Dendritic cell treated with granulocyte-macrophage colony-stimulating factor and Interleukin-4, amounts not matched to agents 40 ng/mL and 50 ng/mL, for 4 days (primary cell): ENCODE measurements at regions of chr14 and their contacts with region 1.

Region 1: GRCh38 chr14:36553656-36554260 is 28.7 kb downstream of the NKX2-8 start:
- H3K4me3 Mint-ChIP-seq: no peak overlapping the region
- H3K27ac Mint-ChIP-seq: no peak overlapping the region
- H3K4me1 Mint-ChIP-seq: no peaks in the 10 kb centered on the region
- H3K27me3 Mint-ChIP-seq: peaks cover 5% of the 10 kb centered on the region

Region 2: DNA sequence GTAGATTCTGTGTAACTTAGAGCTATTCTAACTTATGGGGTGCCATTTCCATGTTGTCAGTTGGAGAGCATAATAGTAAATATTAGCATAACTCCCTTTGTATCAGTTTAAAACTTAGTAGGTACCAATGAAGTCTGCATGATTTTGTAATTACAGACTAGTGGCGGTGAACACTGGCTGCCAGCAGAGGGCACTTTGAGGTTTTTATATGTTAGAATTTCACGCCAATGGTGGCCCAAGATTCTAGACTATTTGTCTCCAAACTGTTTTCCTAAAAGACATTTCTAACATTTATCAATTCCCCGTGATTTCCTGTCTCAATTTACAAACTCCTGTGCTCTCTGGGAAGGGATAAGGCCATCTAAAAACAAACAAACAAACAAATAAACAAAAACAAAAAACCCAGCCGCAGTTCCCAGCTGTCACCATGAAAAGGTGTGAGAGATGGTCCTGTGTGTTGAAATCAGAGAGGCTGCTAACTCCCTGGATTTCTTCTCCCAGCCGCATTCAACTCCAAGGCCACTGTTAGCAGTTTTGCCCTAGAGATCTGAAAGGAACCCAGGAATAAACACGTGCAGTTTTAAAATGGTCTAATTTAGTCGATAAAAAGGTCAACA is 670.0 kb before region 1 on chr14:
- intact Hi-C with region 1: loop called (anchors 10 kb)
- H3K4me3 Mint-ChIP-seq: no peak overlapping the region
- H3K27ac Mint-ChIP-seq: no peak overlapping the region
- H3K4me1 Mint-ChIP-seq: peaks cover 7% of the 10 kb centered on the region
- H3K27me3 Mint-ChIP-seq: peaks cover 2% of the 10 kb centered on the region

Region 3: DNA sequence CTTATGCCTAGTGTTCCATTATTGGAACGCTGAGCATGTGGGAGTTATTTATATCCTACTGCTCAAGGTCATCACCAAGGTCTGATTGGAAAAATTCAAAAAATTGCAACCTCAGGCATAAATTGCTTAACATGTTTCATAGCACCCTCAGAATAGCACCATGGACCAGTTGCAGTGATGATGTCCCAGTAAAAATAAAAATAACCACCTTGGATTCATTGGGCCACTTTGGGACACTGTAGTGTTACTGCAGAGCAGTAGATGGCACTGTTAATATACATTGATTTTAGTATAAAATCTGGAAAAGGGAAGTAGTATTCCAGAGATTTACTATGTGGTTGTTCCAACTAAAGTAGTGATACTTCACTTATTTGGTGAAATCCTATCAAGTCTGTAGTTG is 346.3 kb before region 1 on chr14:
- intact Hi-C with region 1: loop called (anchors 5 kb)
- H3K4me3 Mint-ChIP-seq: no peak overlapping the region
- H3K27ac Mint-ChIP-seq: no peak overlapping the region
- H3K4me1 Mint-ChIP-seq: no peaks in the 10 kb centered on the region
- H3K27me3 Mint-ChIP-seq: peaks cover 1% of the 10 kb centered on the region

Region 4: GRCh38 chr14:36818794-36819384 is 265.1 kb after region 1 on chr14:
- intact Hi-C with region 1: no loop called
- H3K4me3 Mint-ChIP-seq: no peak overlapping the region
- H3K27ac Mint-ChIP-seq: no peak overlapping the region
- H3K4me1 Mint-ChIP-seq: no peaks in the 10 kb centered on the region
- H3K27me3 Mint-ChIP-seq: no peaks in the 10 kb centered on the region